Activated B cell treated with CpG ODN at 0.5 μM for 24 hours (primary cell): ENCODE measurements at regions of chr12 and their contacts with region 1.

Region 1: DNA sequence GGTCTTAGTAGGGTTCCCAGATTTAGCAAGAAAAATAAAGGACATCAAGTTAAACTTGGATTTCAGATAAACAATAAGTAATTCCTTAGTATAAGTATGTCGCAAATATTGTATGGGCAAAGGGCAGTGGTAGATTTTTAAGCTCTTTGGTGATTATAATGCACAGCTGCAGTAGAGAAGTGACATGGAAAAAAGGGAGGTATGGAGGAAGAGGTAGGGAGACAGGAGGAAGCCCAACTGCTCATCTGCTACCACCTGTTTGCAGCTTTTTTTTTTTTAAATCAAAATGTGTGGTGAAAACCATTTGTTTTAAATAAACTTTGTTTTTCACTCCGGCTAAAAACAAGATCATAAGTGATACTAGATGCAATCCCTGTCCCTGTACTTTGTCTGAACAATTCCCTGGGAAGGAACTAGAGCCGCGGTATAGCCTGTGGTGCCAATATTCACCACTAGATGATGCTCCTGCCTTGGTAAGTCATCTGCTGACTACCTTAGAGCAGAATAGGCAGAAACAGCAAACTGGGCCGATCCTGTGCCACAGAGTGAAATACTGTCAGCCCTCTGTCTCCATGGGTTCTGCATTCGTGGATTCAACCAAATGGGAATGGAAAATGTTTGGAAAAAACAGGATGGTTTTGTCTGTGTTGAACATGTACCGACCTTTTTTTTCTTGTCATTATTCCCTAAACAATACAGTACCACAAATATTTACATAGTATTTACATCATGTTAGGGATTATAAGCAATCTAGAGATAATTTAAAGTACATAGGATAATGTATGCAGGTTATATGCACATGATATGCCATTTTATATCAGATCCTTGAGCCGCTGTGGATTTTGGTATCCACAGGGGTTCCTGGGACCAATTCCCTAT is 62.4 kb upstream of the PLBD1 start:
- DNase-seq: peak; percentile 31
- ATAC-seq: peak; percentile 100
- H3K4me3 Mint-ChIP-seq: no peak overlapping the region
- H3K27ac Mint-ChIP-seq: no peak overlapping the region
- H3K4me1 Mint-ChIP-seq: peaks cover 3% of the 10 kb centered on the region
- H3K27me3 Mint-ChIP-seq: no peaks in the 10 kb centered on the region
- CTCF ChIP-seq: peak; percentile 89

Region 2: GRCh38 chr12:14597480-14597879 is 32.6 kb before region 1 on chr12:
- CTCF ChIA-PET with region 1: no interaction called
- POLR2A ChIA-PET with region 1: no interaction called
- intact Hi-C with region 1: no loop called
- DNase-seq: no peak
- ATAC-seq: no peak
- H3K4me3 Mint-ChIP-seq: no peak overlapping the region
- H3K27ac Mint-ChIP-seq: no peak overlapping the region
- H3K4me1 Mint-ChIP-seq: peaks cover 3% of the 10 kb centered on the region
- H3K27me3 Mint-ChIP-seq: no peaks in the 10 kb centered on the region
- CTCF ChIP-seq: no peak

Region 3: DNA sequence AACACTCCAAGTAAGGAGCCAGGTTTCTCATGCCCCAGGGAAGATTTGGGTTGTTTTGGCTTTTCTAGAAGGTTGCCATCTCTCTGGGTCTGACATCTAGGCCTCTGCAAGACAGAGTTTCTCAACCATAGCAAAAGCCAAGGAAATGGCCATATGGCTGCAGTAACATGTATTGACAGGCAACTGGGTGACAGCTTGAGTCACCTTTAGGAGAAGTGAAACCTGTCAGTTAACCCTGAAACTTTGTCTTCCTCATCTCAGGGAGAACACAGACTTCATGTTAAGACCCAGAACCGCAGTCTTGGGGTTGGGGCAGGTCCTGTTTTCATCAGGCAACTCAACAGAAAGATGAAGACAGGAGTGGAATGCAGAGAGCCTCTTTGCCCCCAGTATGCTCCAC is 16.4 kb before region 1 on chr12:
- CTCF ChIA-PET with region 1: interaction called, 6 read pairs
- POLR2A ChIA-PET with region 1: no interaction called
- intact Hi-C with region 1: loop called (anchors 2 kb)
- DNase-seq: peak; percentile 34
- ATAC-seq: peak; percentile 86
- H3K4me3 Mint-ChIP-seq: peak overlapping the region; percentile 60
- H3K27ac Mint-ChIP-seq: peak overlapping the region; percentile 93
- H3K4me1 Mint-ChIP-seq: peaks cover 38% of the 10 kb centered on the region
- H3K27me3 Mint-ChIP-seq: no peaks in the 10 kb centered on the region
- CTCF ChIP-seq: no peak

Region 4: DNA sequence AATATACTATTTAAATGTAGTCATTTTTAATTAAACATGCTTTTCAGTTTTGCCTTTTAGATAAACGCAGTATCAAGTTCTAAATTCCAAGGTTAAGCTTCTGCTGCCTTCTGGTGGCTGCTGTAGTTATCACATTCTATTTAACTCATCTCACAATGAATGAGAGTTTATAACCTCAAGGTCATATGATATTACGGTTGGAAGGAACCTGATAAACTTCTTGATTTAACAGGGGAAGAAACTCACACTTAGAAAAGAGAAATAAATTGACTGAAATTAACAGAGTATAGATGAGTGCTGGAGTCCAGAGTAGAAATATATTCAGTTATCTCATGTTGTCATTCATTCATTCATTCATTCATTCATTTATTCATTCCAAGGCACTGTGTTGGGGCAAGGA is 34.4 kb after region 1 on chr12:
- CTCF ChIA-PET with region 1: interaction called, 6 read pairs
- POLR2A ChIA-PET with region 1: no interaction called
- intact Hi-C with region 1: loop called (anchors 1 kb)
- DNase-seq: no peak
- ATAC-seq: peak; percentile 85
- H3K4me3 Mint-ChIP-seq: no peak overlapping the region
- H3K27ac Mint-ChIP-seq: no peak overlapping the region
- H3K4me1 Mint-ChIP-seq: peaks cover 14% of the 10 kb centered on the region
- H3K27me3 Mint-ChIP-seq: no peaks in the 10 kb centered on the region
- CTCF ChIP-seq: no peak

Region 5: GRCh38 chr12:15220994-15221885 is 591.2 kb after region 1 on chr12 and contains the start of gene RERG:
- CTCF ChIA-PET with region 1: interaction called, 4 read pairs
- POLR2A ChIA-PET with region 1: no interaction called
- intact Hi-C with region 1: loop called (anchors 2 kb)
- DNase-seq: peak; percentile 72
- ATAC-seq: peak; percentile 99
- H3K4me3 Mint-ChIP-seq: peak within 1 kb of the TSS; percentile 68
- H3K27ac Mint-ChIP-seq: no peak within 1 kb of the TSS
- H3K4me1 Mint-ChIP-seq: peaks cover 7% of the 10 kb centered on the region
- H3K27me3 Mint-ChIP-seq: peaks cover 33% of the 10 kb centered on the region
- CTCF ChIP-seq: peak; percentile 69
- total RNA-seq, gene RERG: not detected in 2 replicates

Region 6: DNA sequence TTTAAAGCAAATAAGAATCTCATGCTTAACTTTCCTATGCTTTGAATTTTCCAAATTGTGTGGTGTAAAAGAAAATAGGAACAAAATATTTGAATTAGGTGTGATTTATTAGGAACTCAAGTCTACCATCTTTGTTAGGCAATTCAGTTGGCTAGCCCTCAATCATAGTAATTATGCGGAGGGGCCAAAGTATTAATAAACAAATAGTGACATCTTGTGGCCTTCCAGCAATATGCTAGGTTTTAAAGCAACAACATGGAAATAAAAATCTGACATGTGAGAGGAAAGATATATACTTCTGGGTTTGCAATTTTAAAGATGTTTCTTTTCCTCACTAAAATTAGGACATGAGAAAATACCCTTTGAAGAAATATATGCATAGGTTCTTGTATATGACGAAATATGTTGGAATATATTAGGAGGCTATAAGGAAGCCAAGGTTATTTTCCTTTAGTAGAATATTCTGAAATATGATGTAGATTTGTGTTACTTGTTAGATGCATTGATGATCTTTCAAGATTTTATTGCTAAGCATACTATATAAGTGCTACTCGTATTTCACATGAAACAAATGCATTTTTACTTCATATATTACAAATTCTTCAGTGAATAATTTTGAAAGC is 892.6 kb after region 1 on chr12:
- CTCF ChIA-PET with region 1: no interaction called
- POLR2A ChIA-PET with region 1: no interaction called
- intact Hi-C with region 1: loop called (anchors 10 kb)
- DNase-seq: no peak
- ATAC-seq: no peak
- H3K4me3 Mint-ChIP-seq: no peak overlapping the region
- H3K27ac Mint-ChIP-seq: no peak overlapping the region
- H3K4me1 Mint-ChIP-seq: peaks cover 12% of the 10 kb centered on the region
- H3K27me3 Mint-ChIP-seq: peaks cover 15% of the 10 kb centered on the region
- CTCF ChIP-seq: no peak